Activated B cell treated with CpG ODN at 0.5 μM for 24 hours (primary cell): ENCODE measurements at regions of chr9 and their contacts with region 1.

Region 1: DNA sequence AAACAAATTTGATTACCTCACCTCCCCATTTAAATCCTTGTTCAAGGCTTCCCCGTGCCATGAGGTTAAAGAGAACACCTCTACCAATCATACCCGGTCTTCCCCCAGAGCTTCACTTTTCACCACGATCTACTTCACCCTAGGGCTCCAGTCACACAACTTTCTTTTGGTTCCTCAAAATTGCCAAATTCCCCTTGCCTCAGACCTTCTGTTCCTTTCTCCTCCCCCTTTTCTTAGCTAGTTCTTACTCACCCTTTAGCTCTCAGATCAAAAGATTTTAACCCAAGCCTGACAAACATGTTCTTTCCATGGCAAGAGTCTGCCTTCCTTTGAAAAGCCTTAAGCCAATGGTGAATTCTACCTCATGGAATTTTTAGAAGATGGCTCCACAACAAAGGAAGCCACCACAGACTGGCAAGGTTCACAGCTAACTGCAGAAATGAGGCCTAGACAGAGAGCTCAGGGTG is 56.7 kb downstream of the MAPKAP1 start:
- DNase-seq: no peak
- ATAC-seq: peak; percentile 93
- H3K4me3 Mint-ChIP-seq: peak overlapping the region; percentile 59
- H3K27ac Mint-ChIP-seq: peak overlapping the region; percentile 86
- H3K4me1 Mint-ChIP-seq: peaks cover 86% of the 10 kb centered on the region
- H3K27me3 Mint-ChIP-seq: no peaks in the 10 kb centered on the region
- CTCF ChIP-seq: no peak

Region 2: GRCh38 chr9:125700791-125701190 is 50.5 kb after region 1 on chr9:
- CTCF ChIA-PET with region 1: interaction called, 4 read pairs
- POLR2A ChIA-PET with region 1: interaction called, 9 read pairs
- intact Hi-C with region 1: loop called (anchors 1 kb)
- DNase-seq: peak; percentile 20
- ATAC-seq: peak; percentile 99
- H3K4me3 Mint-ChIP-seq: peak overlapping the region; percentile 68
- H3K27ac Mint-ChIP-seq: peak overlapping the region; percentile 46
- H3K4me1 Mint-ChIP-seq: peaks cover 74% of the 10 kb centered on the region
- H3K27me3 Mint-ChIP-seq: no peaks in the 10 kb centered on the region
- CTCF ChIP-seq: no peak

Region 3: DNA sequence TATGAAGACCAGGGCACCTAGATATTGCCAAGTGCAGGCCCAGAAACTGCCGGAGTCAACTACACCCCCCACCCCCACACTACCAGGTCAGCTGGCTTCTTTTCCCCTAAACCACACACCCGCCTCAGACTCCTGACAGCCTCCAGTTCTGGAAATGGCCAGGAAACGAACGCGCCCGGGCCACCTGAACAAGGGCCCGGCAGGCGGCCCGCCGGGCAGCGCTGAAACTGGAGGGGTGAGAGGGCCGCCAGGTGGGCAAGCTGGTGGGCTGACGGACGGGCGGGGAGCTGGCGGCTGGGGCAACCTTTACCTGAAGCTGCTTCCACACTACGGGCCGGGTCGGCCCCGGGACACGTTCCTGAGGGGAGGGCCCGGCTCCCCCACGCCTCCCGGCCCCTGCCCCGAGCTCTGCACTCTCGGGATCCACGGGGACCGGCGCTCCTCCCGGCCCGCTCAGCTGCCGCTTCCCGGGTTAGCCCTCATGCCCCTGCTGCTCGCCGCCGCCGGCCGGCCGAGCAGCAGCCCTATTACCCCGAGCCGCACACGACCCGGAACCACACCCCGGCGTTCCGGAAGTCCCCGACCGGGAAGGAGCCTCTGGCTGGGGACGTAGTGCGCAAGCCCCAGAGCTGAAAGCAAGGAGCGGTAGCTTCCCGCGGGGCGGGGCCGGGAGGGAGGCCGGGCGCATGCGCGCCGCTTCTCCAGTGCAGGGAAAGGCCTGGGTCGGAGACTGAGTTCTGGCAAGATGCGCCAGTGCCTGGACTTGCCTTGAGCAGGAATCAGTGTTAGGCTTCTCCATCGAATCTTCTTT is 56.6 kb after region 1 on chr9 and contains the start of gene MAPKAP1:
- CTCF ChIA-PET with region 1: no interaction called
- POLR2A ChIA-PET with region 1: interaction called, 18 read pairs
- intact Hi-C with region 1: loop called (anchors 1 kb)
- DNase-seq: peak; percentile 86
- ATAC-seq: peak; percentile 99
- H3K4me3 Mint-ChIP-seq: peak within 1 kb of the TSS; percentile 85
- H3K27ac Mint-ChIP-seq: peak within 1 kb of the TSS; percentile 85
- H3K4me1 Mint-ChIP-seq: peaks cover 44% of the 10 kb centered on the region
- H3K27me3 Mint-ChIP-seq: peaks cover 4% of the 10 kb centered on the region
- CTCF ChIP-seq: no peak
- total RNA-seq, gene MAPKAP1: 80.2 and 84.9 TPM in 2 replicates

Region 4: GRCh38 chr9:125758986-125759763 is 108.9 kb after region 1 on chr9:
- CTCF ChIA-PET with region 1: no interaction called
- POLR2A ChIA-PET with region 1: interaction called, 10 read pairs
- intact Hi-C with region 1: no loop called
- DNase-seq: no peak
- ATAC-seq: peak; percentile 89
- H3K4me3 Mint-ChIP-seq: peak overlapping the region; percentile 78
- H3K27ac Mint-ChIP-seq: peak overlapping the region; percentile 77
- H3K4me1 Mint-ChIP-seq: peaks cover 34% of the 10 kb centered on the region
- H3K27me3 Mint-ChIP-seq: no peaks in the 10 kb centered on the region
- CTCF ChIP-seq: no peak